Naive thymus-derived CD4-positive, alpha-beta T cell (primary cell): ENCODE measurements at regions of chr12 and their contacts with region 1.

Region 1: DNA sequence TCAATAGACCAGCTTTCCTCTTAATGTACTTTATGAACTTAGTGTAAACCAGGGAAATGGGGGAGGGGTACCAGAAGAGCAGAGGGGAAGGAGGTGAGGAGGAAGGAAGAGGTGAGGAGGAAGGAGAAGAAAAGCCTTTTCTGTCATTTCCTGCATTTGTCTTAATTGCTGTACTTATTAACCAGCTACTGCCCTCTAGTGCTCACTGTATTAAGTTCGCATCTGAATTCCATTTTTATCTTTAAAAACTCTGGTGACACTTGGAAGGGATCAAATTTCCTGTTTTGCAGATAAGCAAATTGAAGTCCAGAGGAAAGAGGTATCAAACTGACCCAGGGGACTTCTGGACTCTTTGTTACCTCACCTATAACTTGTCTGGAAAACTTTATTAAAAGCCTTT is 22.2 kb downstream of the MANSC1 start:
- DNase-seq: peak in 7 of 9 donors; percentile 37 to 74 (median 64)
- ATAC-seq: peak; percentile 89
- H3K4me3 ChIP-seq: no peak overlapping the region
- H3K4me3 Mint-ChIP-seq: peak overlapping the region in 1 of 10 donors; percentile 23
- H3K27ac ChIP-seq: peak overlapping the region; percentile 20
- H3K27ac Mint-ChIP-seq: peak overlapping the region in 7 of 9 donors; percentile 39 to 81 (median 72)
- H3K4me1 ChIP-seq: peaks cover 0 to 7% of the 10 kb centered on the region in 2 donors
- H3K4me1 Mint-ChIP-seq: peaks cover 3 to 14% (median 10%) of the 10 kb centered on the region in 7 donors
- H3K27me3 ChIP-seq: no peaks in the 10 kb centered on the region
- H3K27me3 Mint-ChIP-seq: no peaks in the 10 kb centered on the region

Region 2: GRCh38 chr12:11553871-11554533 is 773.8 kb before region 1 on chr12:
- CTCF ChIA-PET with region 1: interaction called, 3 read pairs
- POLR2A ChIA-PET with region 1: no interaction called
- intact Hi-C with region 1: loop called in 1 of 2 experiments (anchors 1 kb)
- DNase-seq: peak in 7 of 9 donors; percentile 41 to 66 (median 58)
- ATAC-seq: peak; percentile 81
- H3K4me3 ChIP-seq: no peak overlapping the region
- H3K4me3 Mint-ChIP-seq: peak overlapping the region in 8 of 10 donors; percentile 12 to 71 (median 36)
- H3K27ac ChIP-seq: no peak overlapping the region
- H3K27ac Mint-ChIP-seq: peak overlapping the region in 8 of 9 donors; percentile 38 to 94 (median 58)
- H3K4me1 ChIP-seq: peaks cover 0 to 15% of the 10 kb centered on the region in 2 donors
- H3K4me1 Mint-ChIP-seq: peaks cover 11 to 47% (median 32%) of the 10 kb centered on the region in 7 donors
- H3K27me3 ChIP-seq: no peaks in the 10 kb centered on the region
- H3K27me3 Mint-ChIP-seq: peaks cover 0 to 26% (median 0%) of the 10 kb centered on the region in 5 donors

Region 3: DNA sequence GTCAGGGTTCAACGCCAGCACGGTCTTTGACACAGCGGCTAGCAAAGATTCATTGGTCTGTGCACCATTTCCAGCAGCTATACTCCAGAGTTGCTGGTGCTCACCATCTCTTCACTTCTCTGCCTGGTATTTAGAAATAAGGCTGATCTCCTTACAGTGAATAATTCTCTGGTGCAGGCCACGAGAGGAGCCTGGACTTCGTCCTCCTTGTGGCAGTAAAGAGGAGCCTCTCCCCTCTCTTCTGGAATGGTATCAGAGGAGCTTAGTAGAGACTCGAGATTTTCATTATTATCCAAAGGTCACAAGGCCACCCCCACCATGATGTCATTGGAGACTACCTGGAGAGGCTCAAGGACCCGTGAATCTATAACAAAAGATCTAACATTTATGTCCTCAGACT is 287.9 kb before region 1 on chr12:
- CTCF ChIA-PET with region 1: interaction called, 3 read pairs
- POLR2A ChIA-PET with region 1: no interaction called
- intact Hi-C with region 1: loop called in 1 of 2 experiments (anchors 5 kb)
- DNase-seq: no peak
- ATAC-seq: no peak
- H3K4me3 ChIP-seq: no peak overlapping the region
- H3K4me3 Mint-ChIP-seq: no peak overlapping the region
- H3K27ac ChIP-seq: no peak overlapping the region
- H3K27ac Mint-ChIP-seq: no peak overlapping the region
- H3K4me1 ChIP-seq: no peaks in the 10 kb centered on the region
- H3K4me1 Mint-ChIP-seq: peaks cover 0 to 6% (median 0%) of the 10 kb centered on the region in 7 donors
- H3K27me3 ChIP-seq: no peaks in the 10 kb centered on the region
- H3K27me3 Mint-ChIP-seq: peaks cover 0 to 16% (median 4%) of the 10 kb centered on the region in 5 donors

Region 4: GRCh38 chr12:12081836-12082497 is 245.8 kb before region 1 on chr12:
- CTCF ChIA-PET with region 1: no interaction called
- POLR2A ChIA-PET with region 1: no interaction called
- intact Hi-C with region 1: loop called in 1 of 2 experiments (anchors 1 kb)
- DNase-seq: peak in 1 of 9 donors; percentile 4
- ATAC-seq: no peak
- H3K4me3 ChIP-seq: no peak overlapping the region
- H3K4me3 Mint-ChIP-seq: no peak overlapping the region
- H3K27ac ChIP-seq: no peak overlapping the region
- H3K27ac Mint-ChIP-seq: peak overlapping the region in 1 of 9 donors; percentile 57
- H3K4me1 ChIP-seq: no peaks in the 10 kb centered on the region
- H3K4me1 Mint-ChIP-seq: peaks cover 0 to 4% (median 0%) of the 10 kb centered on the region in 7 donors
- H3K27me3 ChIP-seq: no peaks in the 10 kb centered on the region
- H3K27me3 Mint-ChIP-seq: peaks cover 0 to 5% (median 0%) of the 10 kb centered on the region in 5 donors